Posterior vena cava (tissue), 2 donors: ENCODE measurements at regions of chr2 and their contacts with region 1.

Region 1: GRCh38 chr2:172172513-172173173 is 69.9 kb upstream of the DLX2 start:
- DNase-seq: peak; percentile 89

Region 2: GRCh38 chr2:172234716-172235691 is 62.4 kb after region 1 on chr2:
- intact Hi-C with region 1: loop called in 1 of 2 experiments (anchors 1 kb)
- DNase-seq: no peak

Region 3: GRCh38 chr2:172461591-172462372 is 289.1 kb after region 1 on chr2:
- intact Hi-C with region 1: loop called (anchors 2 to 5 kb)
- DNase-seq: no peak